ENCODE measurements at regions of chr20 and their contacts with region 1.

Region 1: DNA sequence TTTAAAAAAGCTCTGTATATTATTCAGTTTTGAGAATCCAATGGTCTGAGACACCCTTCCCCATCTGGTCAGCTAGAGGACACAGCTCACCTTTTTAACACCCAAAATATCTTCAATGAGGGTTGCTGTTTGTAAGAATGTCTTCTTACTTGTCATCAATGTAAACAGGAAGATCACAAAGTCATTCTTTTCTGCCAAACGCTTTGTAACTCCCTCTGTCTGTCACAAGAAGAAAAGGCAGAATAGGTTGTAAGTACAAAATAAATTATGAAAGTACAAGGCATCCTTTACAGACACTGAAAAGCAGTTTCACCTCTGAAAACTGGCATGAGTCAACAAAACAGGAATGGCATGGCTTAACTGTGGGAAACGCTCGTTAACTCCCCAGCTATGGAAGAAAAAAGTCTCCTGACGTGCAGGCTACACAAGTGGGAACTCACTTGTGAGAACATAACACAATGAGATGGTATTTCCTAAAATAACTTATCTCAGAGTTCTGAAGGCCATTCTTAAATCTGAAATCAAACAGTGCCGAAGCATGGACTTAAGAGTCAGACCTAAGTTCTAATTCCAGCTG is 42.7 kb downstream of the TRPC4AP start:
- DNase-seq: peak; percentile 36
- H3K4me3 ChIP-seq: no peak overlapping the region
- H3K27ac ChIP-seq: no peak overlapping the region
- H3K4me1 ChIP-seq: peaks cover 18% of the 10 kb centered on the region
- H3K27me3 ChIP-seq: no peaks in the 10 kb centered on the region
- CTCF ChIP-seq: no peak
- POLR2A ChIP-seq: no peak

Region 2: DNA sequence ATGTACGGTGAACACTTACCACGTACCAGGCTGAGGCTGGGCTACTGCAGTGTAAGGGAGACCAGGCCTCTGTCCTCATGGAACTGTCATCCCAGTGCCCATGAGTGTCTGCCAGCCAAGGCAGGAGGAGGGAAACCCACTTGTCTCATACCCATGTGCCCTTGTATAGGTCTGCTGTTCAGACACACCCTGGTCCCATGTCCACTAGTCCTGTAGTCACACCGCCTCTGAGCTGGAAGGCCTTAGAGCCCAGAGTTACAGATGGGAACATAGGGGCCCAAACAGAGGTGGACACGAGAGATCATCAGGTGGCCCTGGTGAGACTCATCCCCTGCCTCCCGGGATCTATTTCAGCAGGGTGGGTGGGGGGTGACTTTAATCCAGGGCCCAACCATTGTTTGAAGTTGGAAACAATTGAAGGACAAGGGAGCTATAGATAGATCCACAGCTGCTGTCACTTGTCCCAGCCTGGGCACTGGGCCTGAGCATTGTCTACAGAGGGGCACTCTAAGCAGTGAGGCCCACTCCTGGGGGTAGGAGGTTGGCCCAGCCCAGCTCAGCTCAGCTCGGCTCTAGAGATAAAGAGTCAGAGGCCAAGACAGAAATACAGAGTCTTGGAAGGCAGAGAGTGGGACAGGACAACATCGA is 79.5 kb before region 1 on chr20:
- CTCF ChIA-PET with region 1: no interaction called
- POLR2A ChIA-PET with region 1: no interaction called
- dilution Hi-C with region 1: no loop called
- intact Hi-C with region 1: no loop called
- DNase-seq: no peak
- H3K4me3 ChIP-seq: no peak overlapping the region
- H3K27ac ChIP-seq: no peak overlapping the region
- H3K4me1 ChIP-seq: no peaks in the 10 kb centered on the region
- H3K27me3 ChIP-seq: no peaks in the 10 kb centered on the region
- CTCF ChIP-seq: no peak
- POLR2A ChIP-seq: no peak

Region 3: GRCh38 chr20:35151736-35152135 is 101.9 kb after region 1 on chr20:
- CTCF ChIA-PET with region 1: no interaction called
- POLR2A ChIA-PET with region 1: no interaction called
- dilution Hi-C with region 1: no loop called
- intact Hi-C with region 1: no loop called
- DNase-seq: no peak
- H3K4me3 ChIP-seq: no peak overlapping the region
- H3K27ac ChIP-seq: no peak overlapping the region
- H3K4me1 ChIP-seq: peaks cover 12% of the 10 kb centered on the region
- H3K27me3 ChIP-seq: no peaks in the 10 kb centered on the region
- CTCF ChIP-seq: no peak
- POLR2A ChIP-seq: no peak

Region 4: GRCh38 chr20:35454881-35455609 is 405.2 kb after region 1 on chr20 and contains the start of gene CEP250:
- CTCF ChIA-PET with region 1: no interaction called
- POLR2A ChIA-PET with region 1: no interaction called
- dilution Hi-C with region 1: no loop called
- intact Hi-C with region 1: loop called (anchors 5 kb)
- DNase-seq: peak; percentile 97
- H3K4me3 ChIP-seq: peak within 1 kb of the TSS; percentile 59 to 85 (median 64)
- H3K27ac ChIP-seq: peak within 1 kb of the TSS; percentile 98
- H3K4me1 ChIP-seq: peaks cover 5% of the 10 kb centered on the region
- H3K27me3 ChIP-seq: no peaks in the 10 kb centered on the region
- CTCF ChIP-seq: no peak
- POLR2A ChIP-seq: peak; percentile 69
- total RNA-seq, gene CEP250: 42.0 and 58.9 TPM in 2 replicates

Measured in endothelial cell of umbilical vein (primary cell).